Right ventricle myocardium superior (tissue), 1 donor: ENCODE measurements at regions of chr12 and their contacts with region 1.

Region 1: GRCh38 chr12:120710031-120710804 is at the start of gene UNC119B:
- DNase-seq: peak; percentile 88
- ATAC-seq: peak; percentile 96
- total RNA-seq, gene UNC119B: 13.4 TPM

Region 2: DNA sequence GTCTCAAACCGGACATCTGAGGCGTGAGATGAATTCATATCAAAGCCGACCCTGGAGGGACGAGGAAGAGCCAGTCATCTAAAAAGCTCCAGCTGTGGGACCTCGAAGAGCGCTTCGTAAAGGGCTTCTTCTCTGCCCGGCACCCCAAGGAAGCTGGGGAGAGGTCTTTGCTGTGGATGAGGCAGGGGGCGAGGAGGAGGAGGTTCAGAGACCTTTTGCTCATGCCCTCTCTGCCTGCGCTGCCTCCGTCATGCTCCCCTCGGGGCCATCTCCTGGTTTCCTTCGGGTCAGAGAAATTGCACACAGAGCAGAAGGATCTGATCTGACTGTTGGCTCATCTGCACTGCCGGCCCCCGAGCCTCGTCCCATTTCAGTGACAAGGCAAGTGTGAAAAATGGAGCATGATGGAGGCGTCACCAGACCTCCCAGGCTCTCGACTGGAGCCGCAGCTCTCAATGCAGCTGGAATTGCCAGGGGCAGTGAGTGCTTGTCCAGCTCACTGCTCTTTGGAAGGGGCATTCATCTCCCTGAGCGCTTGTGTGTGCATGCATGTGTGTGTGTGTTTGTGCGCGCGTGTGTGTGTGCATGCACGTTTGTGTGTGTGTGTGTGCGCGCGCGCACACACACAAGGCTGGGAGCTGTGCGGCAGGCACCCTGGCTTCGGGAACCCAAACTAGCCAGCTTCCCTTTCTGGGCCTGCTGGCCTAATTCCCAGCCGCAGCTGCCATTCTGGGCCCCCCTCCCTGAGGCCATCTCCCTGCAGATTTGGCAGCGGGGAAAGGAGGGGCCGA is 60.6 kb before region 1 on chr12:
- intact Hi-C with region 1: loop called (anchors 2 kb)
- DNase-seq: peak; percentile 63
- ATAC-seq: peak; percentile 9

Region 3: DNA sequence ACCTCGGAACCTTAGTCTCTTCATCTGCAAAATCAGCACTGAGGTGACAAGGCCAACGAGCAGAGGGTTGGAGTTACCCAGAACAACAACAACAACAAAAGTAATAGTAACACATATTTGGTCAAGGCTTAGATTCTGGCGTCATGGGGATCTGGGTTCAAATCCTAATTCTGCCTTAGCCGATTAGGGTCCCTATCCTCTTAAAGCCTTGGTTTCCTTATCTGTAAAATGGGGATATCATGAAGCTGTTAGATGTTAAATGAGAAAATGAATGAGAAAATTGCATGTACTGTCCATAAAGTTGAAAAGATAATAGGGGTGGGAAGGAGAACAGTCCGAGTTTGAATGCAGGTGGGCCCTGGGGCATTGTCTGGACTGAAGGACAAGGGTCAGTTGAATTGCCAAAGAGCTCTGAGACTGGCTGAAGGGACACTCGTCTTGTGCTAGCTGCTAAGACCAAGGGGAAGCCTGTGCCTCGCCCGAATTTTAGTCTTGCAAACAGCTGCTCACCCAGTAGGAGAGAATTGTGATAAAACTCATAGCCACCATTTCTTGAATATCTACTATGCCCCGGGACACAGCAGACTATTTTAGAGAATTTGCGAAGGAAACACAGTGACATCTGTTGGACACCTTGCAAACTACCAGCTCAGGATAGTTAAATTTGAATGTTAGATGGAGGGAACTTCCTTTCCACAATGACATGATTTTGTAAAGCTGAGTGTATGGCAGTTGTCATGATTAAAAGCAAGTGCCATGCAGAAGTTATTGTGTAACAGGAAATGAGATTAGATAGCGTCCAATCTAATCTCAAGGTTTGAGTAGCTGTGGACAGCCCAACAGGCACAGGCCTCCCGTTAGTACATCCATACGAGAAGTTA is 261.3 kb after region 1 on chr12:
- intact Hi-C with region 1: loop called (anchors 5 kb)
- DNase-seq: no peak
- ATAC-seq: peak; percentile 86